ENCODE measurements at regions of chr18 and their contacts with region 1.

Region 1: GRCh38 chr18:3665780-3666525 is 216.0 kb downstream of the TGIF1 start:
- DNase-seq: peak; percentile 82
- H3K4me3 ChIP-seq: peak overlapping the region in 1 of 2 experiments; percentile 41; a peak in 1 of 4 replicates
- H3K27ac ChIP-seq: peak overlapping the region; percentile 37 to 53; a peak in 2 of 4 replicates
- H3K4me1 ChIP-seq: peaks cover 5 to 18% of the 10 kb centered on the region in 2 experiments; a peak in 2 of 4 replicates
- H3K27me3 ChIP-seq: no peaks in the 10 kb centered on the region
- CTCF ChIP-seq: peak; percentile 96
- EP300 ChIP-seq: no peak
- RAD21 ChIP-seq: peak; percentile 98

Region 2: DNA sequence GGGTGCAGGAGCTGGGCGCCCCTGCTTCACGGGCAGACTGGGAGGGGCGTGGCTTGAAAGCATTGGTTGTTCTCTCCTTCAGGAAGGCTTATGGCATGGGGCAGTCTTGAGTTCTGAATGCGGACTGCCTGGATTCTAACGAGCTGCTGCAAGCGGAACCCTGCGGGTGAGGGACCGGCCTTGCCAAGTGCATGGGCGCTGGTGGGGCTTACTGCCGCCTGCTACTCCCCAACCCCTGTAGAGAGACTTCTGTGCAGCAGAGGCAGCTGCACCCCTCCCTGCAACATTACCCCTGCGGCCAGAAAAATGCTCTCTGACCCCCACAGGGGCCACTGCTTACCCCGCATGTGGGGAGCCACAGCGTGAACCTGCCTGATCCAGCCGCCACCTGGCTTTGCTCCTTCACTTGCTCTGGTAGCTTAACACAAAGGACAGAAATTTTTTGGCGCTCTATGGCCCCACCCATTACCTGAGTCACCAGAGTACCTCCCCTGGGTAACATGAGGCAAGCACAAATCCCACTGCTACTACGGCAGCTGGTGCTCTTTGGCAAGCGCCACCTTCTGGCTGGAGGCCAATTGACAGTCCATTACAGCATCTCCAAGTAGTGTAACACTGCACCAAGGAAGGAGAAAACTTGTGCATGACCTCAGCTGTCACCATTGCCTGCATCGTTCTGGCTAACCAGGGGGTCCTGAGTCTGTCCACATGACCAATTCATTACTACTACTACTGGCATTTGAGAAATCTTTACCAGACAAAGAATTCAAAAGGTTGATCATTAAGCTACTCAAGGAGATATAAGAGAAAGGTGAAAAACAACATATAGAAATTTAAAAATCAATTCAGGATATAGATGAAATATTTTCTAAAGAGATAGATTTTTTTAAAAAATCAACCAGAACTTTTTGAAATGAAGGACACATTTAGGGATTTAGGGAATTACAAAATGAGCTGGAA is 368.6 kb before region 1 on chr18:
- CTCF ChIA-PET with region 1: interaction called, 36 read pairs
- POLR2A ChIA-PET with region 1: no interaction called
- DNase-seq: peak; percentile 75
- H3K4me3 ChIP-seq: peak overlapping the region; percentile 79 to 88
- H3K27ac ChIP-seq: peak overlapping the region; percentile 65 to 81
- H3K4me1 ChIP-seq: peaks cover 0 to 4% of the 10 kb centered on the region in 2 experiments; a peak in 1 of 4 replicates
- H3K27me3 ChIP-seq: no peaks in the 10 kb centered on the region
- CTCF ChIP-seq: peak; percentile 84
- EP300 ChIP-seq: no peak; a peak in 1 of 4 replicates
- RAD21 ChIP-seq: peak; percentile 47

Region 3: GRCh38 chr18:3447895-3448837 is 217.8 kb before region 1 on chr18:
- CTCF ChIA-PET with region 1: interaction called, 15 read pairs
- POLR2A ChIA-PET with region 1: no interaction called
- DNase-seq: peak; percentile 88
- H3K4me3 ChIP-seq: peak overlapping the region; percentile 74 to 93
- H3K27ac ChIP-seq: peak overlapping the region; percentile 98 to 99
- H3K4me1 ChIP-seq: peaks cover 15 to 20% of the 10 kb centered on the region in 2 experiments
- H3K27me3 ChIP-seq: no peaks in the 10 kb centered on the region
- CTCF ChIP-seq: peak; percentile 26
- EP300 ChIP-seq: peak; percentile 36 to 84; a peak in 3 of 4 replicates
- RAD21 ChIP-seq: no peak; the same call in none of the 2 replicates

Region 4: DNA sequence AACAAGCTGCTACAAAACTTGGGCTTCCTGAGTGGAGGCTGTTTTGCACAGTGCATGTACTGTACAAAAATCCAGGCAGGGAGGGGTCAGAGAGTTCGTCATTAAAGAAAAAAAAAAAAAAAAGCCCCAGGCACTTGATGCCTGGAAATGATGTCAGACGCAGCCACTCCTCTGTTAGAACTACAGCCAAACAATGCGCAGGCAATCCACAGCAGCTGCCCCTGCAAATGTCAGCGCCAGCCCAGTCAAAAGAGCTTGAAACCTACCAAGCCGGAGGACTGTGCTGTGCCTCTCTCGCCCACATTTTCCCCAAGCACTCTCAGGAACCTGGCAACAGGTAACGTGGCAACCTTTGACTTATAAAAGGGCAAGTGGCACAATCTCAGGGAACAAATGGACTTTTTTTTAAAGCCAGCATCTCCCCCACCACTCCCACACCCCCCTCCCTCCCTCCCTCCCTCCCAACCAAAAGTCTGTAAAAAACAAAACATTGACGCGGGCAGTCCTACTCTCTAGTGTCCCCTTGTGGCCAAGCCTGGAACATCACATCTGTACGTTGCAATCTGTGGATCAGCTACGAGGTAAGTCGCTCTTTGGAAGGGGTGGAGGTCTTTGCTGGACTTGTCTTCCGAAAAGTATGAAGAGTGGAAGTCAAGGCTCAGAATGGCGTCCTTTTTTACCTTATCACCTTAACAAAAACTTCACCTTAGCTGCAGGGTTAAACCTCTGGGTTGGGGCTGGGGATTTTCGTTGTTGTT is 71.9 kb before region 1 on chr18:
- CTCF ChIA-PET with region 1: interaction called, 76 read pairs
- POLR2A ChIA-PET with region 1: interaction called, 3 read pairs
- DNase-seq: peak; percentile 74
- H3K4me3 ChIP-seq: peak overlapping the region; percentile 53 to 67
- H3K27ac ChIP-seq: peak overlapping the region; percentile 100
- H3K4me1 ChIP-seq: peaks cover 36 to 56% of the 10 kb centered on the region in 2 experiments
- H3K27me3 ChIP-seq: no peaks in the 10 kb centered on the region
- CTCF ChIP-seq: peak; percentile 73
- EP300 ChIP-seq: peak in 1 of 2 experiments; percentile 26; a peak in 3 of 4 replicates
- RAD21 ChIP-seq: peak; percentile 70

Region 5: GRCh38 chr18:3645384-3646156 is 20.4 kb before region 1 on chr18:
- CTCF ChIA-PET with region 1: interaction called, 12 read pairs
- POLR2A ChIA-PET with region 1: no interaction called
- DNase-seq: no peak
- H3K4me3 ChIP-seq: no peak overlapping the region
- H3K27ac ChIP-seq: no peak overlapping the region
- H3K4me1 ChIP-seq: peaks cover 0 to 9% of the 10 kb centered on the region in 2 experiments; a peak in 1 of 4 replicates
- H3K27me3 ChIP-seq: no peaks in the 10 kb centered on the region
- CTCF ChIP-seq: no peak
- EP300 ChIP-seq: no peak
- RAD21 ChIP-seq: no peak

Region 6: DNA sequence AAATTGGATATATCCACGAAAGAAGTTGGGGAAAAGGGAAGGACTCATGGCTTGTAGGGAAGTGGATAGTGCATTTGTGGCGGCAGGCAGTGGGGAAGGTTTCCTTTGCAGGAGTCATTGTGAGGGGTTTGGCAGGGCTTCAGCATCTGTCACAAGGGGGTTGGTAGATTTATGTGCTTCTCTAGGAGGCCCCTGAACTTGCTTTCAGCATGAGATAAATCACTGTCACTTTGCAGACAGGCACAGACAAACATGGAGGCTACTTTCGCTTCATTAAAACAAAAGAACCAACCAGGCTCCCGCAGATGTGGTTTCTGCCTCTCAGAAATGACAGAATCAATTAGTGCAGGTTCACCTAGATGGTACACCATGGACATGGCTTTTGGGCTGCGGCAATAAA is 124.8 kb after region 1 on chr18:
- CTCF ChIA-PET with region 1: no interaction called
- POLR2A ChIA-PET with region 1: no interaction called
- DNase-seq: no peak
- H3K4me3 ChIP-seq: no peak overlapping the region; a peak in 1 of 4 replicates
- H3K27ac ChIP-seq: peak overlapping the region in 1 of 2 experiments; percentile 13; a peak in 1 of 4 replicates
- H3K4me1 ChIP-seq: peaks cover 0 to 5% of the 10 kb centered on the region in 2 experiments; a peak in 1 of 4 replicates
- H3K27me3 ChIP-seq: no peaks in the 10 kb centered on the region
- CTCF ChIP-seq: no peak
- EP300 ChIP-seq: peak in 1 of 2 experiments; percentile 64; a peak in 1 of 4 replicates
- RAD21 ChIP-seq: no peak

Measured in SK-N-SH (cell line).